ACHN (cell line): ENCODE measurements at regions of chr10 and their contacts with region 1.

Region 1: DNA sequence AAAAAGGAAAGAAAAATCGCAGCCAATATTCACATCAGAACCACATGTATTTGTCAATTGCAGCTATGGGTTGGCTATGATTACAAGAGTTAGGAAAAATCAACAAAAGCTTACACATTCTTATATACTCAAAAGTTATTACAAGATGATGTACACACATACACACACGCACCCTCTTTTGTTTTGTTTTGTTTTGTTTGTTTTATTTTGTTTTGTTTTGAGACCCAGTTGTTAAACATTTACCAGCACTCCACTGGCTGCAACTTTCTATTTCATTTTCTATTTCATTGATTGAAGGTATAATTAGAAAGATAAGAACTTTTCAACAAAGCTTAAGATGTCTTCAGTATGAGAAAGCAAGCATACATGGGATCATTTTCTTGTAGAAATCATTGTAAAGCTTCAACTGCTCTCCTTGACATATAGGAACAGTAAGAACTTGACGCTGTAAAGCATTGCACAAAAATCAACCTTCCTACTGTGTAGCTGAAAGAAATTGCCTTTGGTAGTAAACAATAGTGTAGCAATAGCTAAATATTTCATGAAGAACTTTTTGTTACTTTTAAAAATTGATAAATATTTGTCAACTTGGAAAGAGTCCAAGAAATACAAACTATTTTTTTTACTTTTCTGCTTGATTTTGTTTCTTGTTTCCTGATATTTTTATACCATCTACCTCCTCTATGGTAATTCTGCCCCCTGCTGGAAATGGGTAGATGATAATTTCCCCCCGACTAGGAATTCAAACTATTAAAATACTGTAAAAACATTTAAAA is 205.9 kb downstream of the MBL2 start:
- DNase-seq: peak; percentile 52

Region 2: DNA sequence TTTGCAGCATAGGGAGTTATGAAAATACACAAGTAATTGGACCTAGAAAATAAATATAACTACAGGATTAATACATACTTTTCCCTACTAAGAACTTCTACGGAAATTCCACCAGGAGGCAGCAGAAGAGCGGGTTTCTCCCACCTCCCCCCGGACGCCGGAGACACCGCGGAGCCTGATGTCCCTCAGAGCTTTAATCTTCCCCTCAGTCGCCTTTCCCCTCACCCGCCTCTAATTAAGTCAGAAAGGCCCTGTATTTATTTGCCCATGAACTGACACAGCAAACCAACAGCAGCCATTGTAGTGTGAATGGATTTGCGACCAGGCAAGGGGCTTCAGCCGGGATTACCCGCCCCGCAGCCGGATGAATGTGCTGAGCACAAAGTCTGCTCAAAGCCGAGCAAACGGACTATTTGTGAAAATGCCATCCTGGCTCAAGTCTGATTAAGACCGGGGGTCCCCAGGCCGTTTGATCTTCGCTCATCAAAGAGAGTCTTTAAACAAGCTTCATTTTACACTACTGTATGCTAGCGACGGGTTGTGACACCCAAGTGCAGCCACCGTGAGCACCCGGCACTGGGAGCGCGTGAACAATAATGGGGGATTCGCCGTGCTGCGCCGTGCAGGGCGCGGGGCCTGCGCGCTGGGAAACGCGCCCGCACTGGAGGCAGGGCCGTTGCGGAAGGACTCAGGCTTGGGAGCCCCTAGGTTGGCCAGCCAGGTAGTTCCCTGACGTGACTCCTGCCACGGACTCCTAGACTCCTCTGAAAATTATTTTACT is 258.2 kb before region 1 on chr10:
- in situ Hi-C with region 1: loop called (anchors 25 kb)
- DNase-seq: peak; percentile 47

Region 3: DNA sequence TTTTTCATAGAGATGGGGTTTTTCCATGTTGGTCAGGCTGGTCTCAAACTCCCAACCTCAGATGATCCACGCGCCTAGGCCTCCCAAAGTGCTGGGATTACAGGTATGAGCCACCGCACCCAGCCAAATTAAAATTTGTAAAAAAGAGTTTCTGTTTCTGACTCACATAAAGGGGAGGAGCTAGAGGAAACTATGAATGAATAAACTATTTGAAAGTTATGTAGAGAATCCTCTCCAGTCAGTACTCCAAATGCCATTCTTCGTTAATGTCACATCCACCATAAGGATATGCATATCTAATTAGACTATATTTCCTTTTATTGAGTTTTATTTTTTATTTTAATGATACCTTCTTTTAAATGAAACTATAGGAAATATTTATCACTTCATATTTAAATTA is 153.4 kb after region 1 on chr10:
- in situ Hi-C with region 1: no loop called
- DNase-seq: no peak

Region 4: DNA sequence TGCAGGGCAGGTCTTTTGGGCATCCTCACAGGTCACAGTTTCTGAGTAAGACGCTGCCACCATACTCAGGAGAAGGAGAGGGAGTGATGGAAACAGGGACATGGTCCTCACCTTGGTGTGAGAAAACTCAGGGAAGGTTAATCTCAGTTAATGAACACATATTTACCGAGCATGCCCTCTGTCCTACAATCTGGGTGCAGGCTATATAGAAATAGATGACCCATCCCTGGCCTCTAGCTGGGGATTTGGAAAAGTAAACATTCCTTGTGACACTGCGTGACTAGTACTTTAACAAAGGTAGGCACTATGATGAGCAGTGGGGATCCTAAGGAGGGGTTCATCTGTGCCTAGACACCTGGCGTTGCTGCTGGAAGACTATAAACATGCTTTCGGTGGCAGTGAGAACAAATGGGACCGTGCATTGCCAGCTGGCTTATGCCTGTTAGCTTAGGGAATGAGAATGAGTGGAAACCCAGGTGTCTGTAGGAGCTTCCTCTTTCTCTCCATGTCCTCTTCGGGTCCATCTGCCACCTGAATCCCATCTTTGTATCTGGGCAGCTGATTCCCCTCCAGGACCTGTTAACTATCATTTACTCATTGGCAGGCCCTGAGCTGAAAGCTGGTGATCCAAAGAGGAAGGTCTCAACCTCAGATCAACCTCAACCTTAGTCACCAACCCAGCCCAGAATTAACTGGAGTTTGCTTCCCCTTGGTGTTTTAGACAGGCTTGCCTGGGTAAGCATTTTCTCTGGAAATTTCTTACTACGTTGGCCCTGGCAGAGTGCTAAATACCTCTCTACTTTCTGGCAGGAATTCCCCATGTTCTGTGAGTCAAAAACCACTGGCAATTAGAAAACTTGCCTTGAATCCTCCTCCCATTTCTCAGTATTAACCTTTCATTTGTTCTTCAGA is 205.1 kb after region 1 on chr10:
- in situ Hi-C with region 1: no loop called
- DNase-seq: no peak